Endothelial cell of umbilical vein (primary cell): ENCODE measurements at regions of chr9 and their contacts with region 1.

Region 1: GRCh38 chr9:37433867-37434371 is 11.4 kb downstream of the GRHPR start:
- DNase-seq: peak; percentile 20
- H3K4me3 ChIP-seq: no peak overlapping the region
- H3K27ac ChIP-seq: no peak overlapping the region
- H3K4me1 ChIP-seq: no peaks in the 10 kb centered on the region
- H3K27me3 ChIP-seq: no peaks in the 10 kb centered on the region
- CTCF ChIP-seq: no peak
- POLR2A ChIP-seq: no peak

Region 2: GRCh38 chr9:37364751-37365360 is 69.1 kb before region 1 on chr9:
- CTCF ChIA-PET with region 1: no interaction called
- POLR2A ChIA-PET with region 1: interaction called, 19 read pairs
- dilution Hi-C with region 1: no loop called
- intact Hi-C with region 1: no loop called
- DNase-seq: peak; percentile 10
- H3K4me3 ChIP-seq: no peak overlapping the region
- H3K27ac ChIP-seq: no peak overlapping the region
- H3K4me1 ChIP-seq: no peaks in the 10 kb centered on the region
- H3K27me3 ChIP-seq: no peaks in the 10 kb centered on the region
- CTCF ChIP-seq: no peak
- POLR2A ChIP-seq: no peak